ENCODE measurements at regions of chrX and their contacts with region 1.

Region 1: DNA sequence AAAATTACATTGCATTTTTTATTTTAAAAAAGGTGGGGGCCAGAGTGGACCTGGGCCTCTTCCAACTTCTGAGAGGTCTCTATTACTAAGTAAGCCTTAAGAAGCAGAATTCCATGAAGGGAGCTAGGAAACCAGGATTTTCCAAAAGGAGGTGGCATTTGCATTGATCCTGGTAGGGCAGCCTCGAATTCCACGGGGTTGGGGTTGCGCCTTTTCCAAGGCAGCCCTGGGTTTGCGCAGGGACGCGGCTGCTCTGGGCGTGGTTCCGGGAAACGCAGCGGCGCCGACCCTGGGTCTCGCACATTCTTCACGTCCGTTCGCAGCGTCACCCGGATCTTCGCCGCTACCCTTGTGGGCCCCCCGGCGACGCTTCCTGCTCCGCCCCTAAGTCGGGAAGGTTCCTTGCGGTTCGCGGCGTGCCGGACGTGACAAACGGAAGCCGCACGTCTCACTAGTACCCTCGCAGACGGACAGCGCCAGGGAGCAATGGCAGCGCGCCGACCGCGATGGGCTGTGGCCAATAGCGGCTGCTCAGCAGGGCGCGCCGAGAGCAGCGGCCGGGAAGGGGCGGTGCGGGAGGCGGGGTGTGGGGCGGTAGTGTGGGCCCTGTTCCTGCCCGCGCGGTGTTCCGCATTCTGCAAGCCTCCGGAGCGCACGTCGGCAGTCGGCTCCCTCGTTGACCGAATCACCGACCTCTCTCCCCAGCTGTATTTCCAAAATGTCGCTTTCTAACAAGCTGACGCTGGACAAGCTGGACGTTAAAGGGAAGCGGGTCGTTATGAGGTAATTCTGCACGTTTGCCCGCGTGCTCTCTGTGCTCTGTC is at the start of gene PGK1:
- DNase-seq: peak; percentile 93
- H3K4me3 Mint-ChIP-seq: peak within 1 kb of the TSS; percentile 96
- H3K27ac Mint-ChIP-seq: peak within 1 kb of the TSS; percentile 87
- H3K4me1 Mint-ChIP-seq: peaks cover 32% of the 10 kb centered on the region
- H3K27me3 Mint-ChIP-seq: no peaks in the 10 kb centered on the region
- total RNA-seq, gene PGK1: 1,005 and 1,045 TPM in 2 replicates

Region 2: GRCh38 chrX:77899081-77899828 is 204.6 kb before region 1 on chrX and contains the start of gene COX7B:
- intact Hi-C with region 1: loop called (anchors 1 kb)
- DNase-seq: peak; percentile 67
- H3K4me3 Mint-ChIP-seq: peak within 1 kb of the TSS; percentile 94
- H3K27ac Mint-ChIP-seq: peak within 1 kb of the TSS; percentile 92
- H3K4me1 Mint-ChIP-seq: peaks cover 12% of the 10 kb centered on the region
- H3K27me3 Mint-ChIP-seq: no peaks in the 10 kb centered on the region
- total RNA-seq, gene COX7B: 274 and 297 TPM in 2 replicates

Region 3: DNA sequence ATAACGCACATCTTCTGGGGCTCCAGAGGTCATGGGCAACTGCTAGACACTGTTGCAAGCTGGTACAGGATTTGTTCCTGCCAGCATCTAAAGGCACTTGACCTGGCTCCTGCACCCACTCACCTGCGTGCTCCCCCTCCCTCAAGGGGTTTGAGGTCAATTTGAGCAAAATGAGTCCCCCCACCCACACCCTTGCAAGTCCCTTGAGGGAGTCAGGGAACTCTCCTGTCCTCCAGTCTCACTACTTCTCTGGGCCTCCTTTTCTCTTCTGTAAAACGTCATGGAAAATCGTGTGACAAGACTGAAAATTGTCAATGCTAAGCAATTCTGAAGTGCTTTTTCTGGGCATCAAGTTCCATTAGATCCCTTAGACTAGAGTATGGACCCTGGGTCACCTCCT is 39.7 kb before region 1 on chrX:
- intact Hi-C with region 1: loop called (anchors 2 kb)
- DNase-seq: no peak
- H3K4me3 Mint-ChIP-seq: no peak overlapping the region
- H3K27ac Mint-ChIP-seq: no peak overlapping the region
- H3K4me1 Mint-ChIP-seq: peaks cover 17% of the 10 kb centered on the region
- H3K27me3 Mint-ChIP-seq: no peaks in the 10 kb centered on the region

Region 4: DNA sequence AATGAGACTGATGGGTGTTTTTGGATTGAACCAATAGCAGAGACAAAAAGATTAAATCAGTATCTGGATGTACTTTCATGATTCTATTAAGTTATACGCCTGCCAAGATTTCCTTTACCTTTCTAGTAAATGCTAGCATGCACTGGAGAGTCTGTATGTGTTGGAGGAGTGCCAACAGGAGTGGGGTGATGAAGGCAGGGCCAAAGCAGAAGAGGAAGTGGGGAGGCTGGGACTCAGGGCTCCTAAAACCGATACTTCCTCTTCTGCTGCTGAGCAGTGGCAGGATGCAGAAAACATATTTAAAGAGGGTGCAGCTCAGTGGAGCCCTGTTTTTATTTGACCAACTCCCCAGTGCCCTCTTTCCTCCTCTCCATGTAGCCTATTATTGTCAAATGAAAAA is 218.0 kb after region 1 on chrX:
- intact Hi-C with region 1: loop called (anchors 2 kb)
- DNase-seq: peak; percentile 38
- H3K4me3 Mint-ChIP-seq: peak overlapping the region; percentile 33
- H3K27ac Mint-ChIP-seq: peak overlapping the region; percentile 89
- H3K4me1 Mint-ChIP-seq: peaks cover 30% of the 10 kb centered on the region
- H3K27me3 Mint-ChIP-seq: no peaks in the 10 kb centered on the region

Measured in activated T-helper 2 cell treated with anti-CD3 and anti-CD28 coated beads, Interferon-gamma antibody, Interleukin-2, Interleukin-4, amounts not matched to agents 10 μg/mL and 5 μg/mL and 100 μg/mL, durations not matched to agents 14 hours and 24 hours and 36 hours (primary cell).